Esophagus muscularis mucosa (tissue), 4 donors: ENCODE measurements at regions of chr6 and their contacts with region 1.

Region 1: DNA sequence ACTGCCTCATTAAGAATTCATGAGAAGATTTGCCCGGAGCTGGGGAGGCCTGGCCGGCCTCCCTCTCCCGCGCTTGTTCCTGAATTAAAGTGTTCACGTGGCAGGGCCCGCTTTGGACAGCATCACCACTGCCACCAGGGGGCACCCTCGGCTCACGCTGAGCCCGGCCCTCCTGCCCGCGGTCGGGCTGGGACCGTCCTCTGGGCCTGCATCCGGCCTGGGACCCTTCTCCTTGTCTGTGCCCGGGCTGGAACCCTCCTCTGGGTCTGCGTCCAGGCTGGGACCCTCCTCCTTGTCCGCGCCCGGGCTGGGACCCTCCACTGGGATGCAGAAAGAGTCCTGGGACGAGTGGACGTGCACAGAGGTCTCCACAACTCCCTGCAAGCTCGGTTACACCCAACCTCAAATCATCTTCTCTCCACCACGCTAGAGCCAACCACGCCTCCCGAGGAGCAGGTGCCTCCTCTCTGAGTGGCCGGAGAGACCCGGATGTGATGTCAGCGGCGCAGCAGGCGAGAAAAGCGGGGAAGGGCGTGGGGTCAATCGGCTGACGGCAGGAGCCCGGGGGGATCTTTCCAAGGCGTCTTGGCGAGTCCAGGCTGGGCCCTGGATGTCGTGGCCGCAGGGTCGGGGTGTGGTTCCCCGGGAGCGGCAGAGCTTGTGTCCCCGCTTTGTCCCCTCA is 50.9 kb upstream of the DACT2 start:
- DNase-seq: no peak
- H3K4me3 ChIP-seq: no peak overlapping the region
- H3K27ac ChIP-seq: no peak overlapping the region
- H3K4me1 ChIP-seq: peaks cover 3 to 37% (median 34%) of the 10 kb centered on the region in 4 donors
- H3K27me3 ChIP-seq: peaks cover 0 to 11% (median 0%) of the 10 kb centered on the region in 4 donors
- CTCF ChIP-seq: peak; percentile 92 to 98 (median 93)
- EP300 ChIP-seq: no peak
- POLR2A ChIP-seq: no peak

Region 2: DNA sequence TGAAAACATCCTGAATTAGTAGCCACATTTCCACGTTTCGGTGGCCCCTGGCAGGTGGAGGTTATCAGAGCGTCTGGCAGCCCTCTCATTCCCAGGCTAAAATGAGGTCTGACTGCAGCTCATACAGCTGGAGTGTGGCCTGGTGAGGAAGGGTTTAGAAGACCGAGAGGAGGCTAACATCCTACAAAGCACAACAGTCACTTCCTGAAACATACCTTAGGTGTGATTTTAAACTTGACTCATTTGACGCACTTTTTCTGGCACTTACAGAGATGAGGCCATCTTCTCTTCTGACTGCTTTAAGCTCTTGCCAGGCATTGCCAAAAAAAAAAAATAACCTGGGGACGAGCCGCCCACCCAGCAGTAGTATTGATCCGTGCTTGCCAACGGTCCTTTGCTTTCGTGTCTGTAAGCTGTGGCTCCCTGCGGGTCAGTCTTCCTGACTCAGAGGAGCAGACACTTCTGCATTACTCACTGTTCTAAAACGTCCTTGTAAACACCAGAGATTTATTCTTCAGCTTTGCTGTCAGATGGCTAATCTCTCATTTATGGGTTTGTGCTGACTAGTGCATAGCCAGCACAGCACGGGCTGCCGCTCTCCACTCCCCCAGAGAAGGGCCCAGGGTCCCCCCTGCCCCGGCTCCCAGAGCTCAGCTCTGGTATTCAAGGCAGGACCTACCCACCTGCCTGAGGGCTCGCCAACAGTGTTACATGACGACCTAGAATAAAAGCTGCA is 213.0 kb before region 1 on chr6:
- intact Hi-C with region 1: loop called (anchors 5 kb)
- DNase-seq: peak; percentile 91
- H3K4me3 ChIP-seq: peak overlapping the region in 1 of 4 donors; percentile 5
- H3K27ac ChIP-seq: peak overlapping the region in 3 of 4 donors; percentile 0 to 38 (median 34)
- H3K4me1 ChIP-seq: peaks cover 0 to 21% (median 18%) of the 10 kb centered on the region in 4 donors
- H3K27me3 ChIP-seq: no peaks in the 10 kb centered on the region
- CTCF ChIP-seq: no peak
- EP300 ChIP-seq: no peak
- POLR2A ChIP-seq: no peak

Region 3: DNA sequence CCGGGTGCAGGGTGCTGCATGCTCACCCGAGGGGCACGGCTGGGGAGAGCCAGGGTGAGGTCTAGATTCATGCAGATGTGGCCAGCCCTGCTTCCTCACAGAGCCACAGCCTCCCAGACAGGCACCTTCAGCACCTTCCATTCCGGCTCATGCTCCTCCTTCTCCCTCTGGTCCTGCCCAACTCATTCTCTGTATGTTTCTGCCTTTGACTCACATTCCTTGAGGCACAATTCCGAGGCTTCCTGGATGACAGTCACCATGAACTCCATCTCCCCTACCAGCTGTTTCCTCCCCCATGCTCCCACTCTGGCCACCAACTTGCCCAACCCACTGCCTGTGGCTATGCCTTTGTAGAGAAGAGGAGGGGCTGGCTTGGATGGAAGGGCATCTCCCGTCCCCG is 86.2 kb before region 1 on chr6:
- intact Hi-C with region 1: no loop called
- DNase-seq: no peak
- H3K4me3 ChIP-seq: no peak overlapping the region
- H3K27ac ChIP-seq: no peak overlapping the region
- H3K4me1 ChIP-seq: no peaks in the 10 kb centered on the region
- H3K27me3 ChIP-seq: peaks cover 0 to 29% (median 0%) of the 10 kb centered on the region in 4 donors
- CTCF ChIP-seq: no peak
- EP300 ChIP-seq: no peak
- POLR2A ChIP-seq: no peak

Region 4: DNA sequence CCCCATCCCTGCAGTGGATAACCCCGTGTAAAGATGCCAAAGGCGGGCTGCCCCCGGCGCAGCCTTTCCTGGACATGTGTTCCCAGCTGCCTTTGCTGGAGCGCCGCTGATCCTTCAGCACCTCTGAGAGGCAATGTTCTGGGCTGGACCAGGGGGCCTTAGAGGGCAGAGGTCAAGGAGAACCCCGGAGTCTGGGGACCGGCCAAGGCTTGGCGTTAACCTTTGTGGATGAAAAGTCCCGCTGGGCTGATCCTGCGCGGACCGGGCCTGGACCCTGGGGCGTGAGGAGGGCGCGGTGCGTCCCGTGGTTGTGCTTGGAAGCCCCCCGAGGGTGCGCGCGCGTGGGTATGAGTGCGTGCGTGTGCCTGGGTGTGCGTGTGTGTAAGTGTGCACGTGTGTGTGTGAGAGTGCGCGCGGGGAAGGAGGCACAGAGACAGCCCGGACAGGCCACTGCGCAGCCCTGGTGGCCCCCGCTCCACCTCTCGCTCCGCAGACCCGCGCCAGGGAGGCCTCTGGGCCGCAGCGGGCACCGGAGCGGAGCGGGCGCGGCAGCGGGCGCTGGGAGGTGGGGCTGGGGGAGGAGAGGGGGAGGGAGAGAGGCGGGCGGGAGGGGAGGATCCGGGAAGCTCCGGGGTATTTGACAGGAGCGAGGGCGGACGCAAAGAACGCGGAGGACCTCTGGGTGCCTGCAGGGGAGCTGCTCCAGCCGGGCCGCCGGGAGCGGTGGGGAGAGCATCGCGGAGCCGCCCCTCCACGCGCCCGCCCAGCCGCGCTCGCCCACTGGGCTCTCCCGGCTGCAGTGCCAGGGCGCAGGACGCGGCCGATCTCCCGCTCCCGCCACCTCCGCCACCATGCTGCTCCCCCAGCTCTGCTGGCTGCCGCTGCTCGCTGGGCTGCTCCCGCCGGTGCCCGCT is 70.3 kb after region 1 on chr6 and contains the start of gene SMOC2:
- intact Hi-C with region 1: loop called (anchors 2 kb)
- DNase-seq: no peak
- H3K4me3 ChIP-seq: peak within 1 kb of the TSS; percentile 73 to 88 (median 80)
- H3K27ac ChIP-seq: peak within 1 kb of the TSS; percentile 64 to 74 (median 72)
- H3K4me1 ChIP-seq: peaks cover 12 to 52% (median 37%) of the 10 kb centered on the region in 4 donors
- H3K27me3 ChIP-seq: peaks cover 0 to 25% (median 0%) of the 10 kb centered on the region in 4 donors
- CTCF ChIP-seq: peak in 1 of 3 experiments; percentile 8
- EP300 ChIP-seq: no peak
- POLR2A ChIP-seq: no peak
- total RNA-seq, gene SMOC2: 45.8 to 130 (median 84.0) TPM

Region 5: DNA sequence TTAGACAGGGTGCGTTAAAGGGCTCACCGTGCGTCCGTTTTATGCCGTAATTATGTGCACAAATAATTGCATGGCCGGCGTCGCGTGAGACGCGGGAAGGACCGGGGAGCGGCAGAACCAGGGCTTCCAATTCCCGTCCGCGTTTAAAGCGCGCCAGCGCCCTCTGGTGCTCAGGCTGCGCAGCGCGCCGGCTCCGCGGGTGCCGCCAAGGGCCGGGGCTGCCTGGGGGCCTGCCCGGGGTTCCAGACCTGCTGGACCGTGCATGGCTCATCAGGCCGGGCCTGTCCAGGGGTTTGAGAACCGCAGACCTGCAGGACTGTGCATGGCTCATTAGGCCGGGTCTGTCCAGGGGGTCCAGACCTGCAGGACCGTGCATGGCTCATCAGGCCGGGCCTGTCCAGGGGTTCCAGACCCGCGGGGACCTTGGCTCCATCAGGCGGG is 514.2 kb after region 1 on chr6:
- intact Hi-C with region 1: loop called (anchors 1 kb)
- DNase-seq: no peak
- H3K4me3 ChIP-seq: peak overlapping the region; percentile 15 to 43 (median 18)
- H3K27ac ChIP-seq: no peak overlapping the region
- H3K4me1 ChIP-seq: peaks cover 0 to 14% (median 9%) of the 10 kb centered on the region in 4 donors
- H3K27me3 ChIP-seq: peaks cover 0 to 8% (median 0%) of the 10 kb centered on the region in 4 donors
- CTCF ChIP-seq: peak in 2 of 3 experiments; percentile 94
- EP300 ChIP-seq: no peak
- POLR2A ChIP-seq: no peak